WTC11 (cell line): ENCODE measurements at regions of chr7 and their contacts with region 1.

Region 1: GRCh38 chr7:70788276-70788675 is 343.7 kb upstream of the GALNT17 start:
- DNase-seq: no peak
- ATAC-seq: no peak
- H3K4me3 Mint-ChIP-seq: no peak overlapping the region
- H3K27ac Mint-ChIP-seq: no peak overlapping the region
- H3K4me1 Mint-ChIP-seq: 0 out of 2 replicates have a peak, but pooled peaks cover 6% of the 10 kb centered on the region
- H3K27me3 Mint-ChIP-seq: no peaks in the 10 kb centered on the region
- CTCF ChIP-seq: no peak

Region 2: GRCh38 chr7:70775570-70776156 is 12.6 kb before region 1 on chr7:
- CTCF ChIA-PET with region 1: interaction called, 10 read pairs
- POLR2A ChIA-PET with region 1: no interaction called
- DNase-seq: no peak
- ATAC-seq: peak; percentile 65
- H3K4me3 Mint-ChIP-seq: no peak overlapping the region
- H3K27ac Mint-ChIP-seq: no peak overlapping the region
- H3K4me1 Mint-ChIP-seq: peaks cover 48% of the 10 kb centered on the region
- H3K27me3 Mint-ChIP-seq: no peaks in the 10 kb centered on the region
- CTCF ChIP-seq: no peak